IMR-90 (cell line): ENCODE measurements at regions of chr11 and their contacts with region 1.

Region 1: GRCh38 chr11:14249121-14249963 is 109.6 kb downstream of the RRAS2 start:
- DNase-seq: peak; percentile 53
- ATAC-seq: peak; percentile 56
- H3K4me3 ChIP-seq: no peak overlapping the region
- H3K27ac ChIP-seq: no peak overlapping the region
- H3K4me1 ChIP-seq: peaks cover 2% of the 10 kb centered on the region; the same call in 1 of the 2 replicates
- H3K27me3 ChIP-seq: peaks cover 49% of the 10 kb centered on the region
- CTCF ChIP-seq: peak; percentile 92
- POLR2A ChIP-seq: 0 out of 2 replicates have a peak, but pooled peaks have one; percentile 23
- RAD21 ChIP-seq: peak; percentile 95

Region 2: DNA sequence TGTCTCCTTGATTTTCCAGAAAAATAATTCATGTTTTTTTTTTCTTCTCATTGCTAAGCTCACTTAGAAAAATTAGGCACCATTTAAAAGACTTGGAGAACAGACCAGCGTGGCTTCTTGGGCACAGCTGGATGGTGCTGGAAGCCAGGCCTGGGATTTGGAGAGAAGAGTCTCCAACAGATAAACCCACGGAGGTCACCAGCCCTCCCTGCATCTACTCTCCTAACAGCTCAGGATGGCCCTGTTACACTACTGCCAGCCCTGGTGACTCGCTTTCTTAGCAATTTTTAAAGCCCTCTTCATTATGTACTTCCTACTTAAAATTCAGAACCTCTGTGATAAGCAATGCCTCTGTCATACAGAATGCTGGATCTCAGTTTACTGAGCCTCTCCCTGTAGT is 755.3 kb before region 1 on chr11:
- CTCF ChIA-PET with region 1: no interaction called
- POLR2A ChIA-PET with region 1: no interaction called
- dilution Hi-C with region 1: no loop called
- in situ Hi-C with region 1: no loop called
- intact Hi-C with region 1: loop called (anchors 5 kb)
- DNase-seq: no peak
- ATAC-seq: no peak
- H3K4me3 ChIP-seq: no peak overlapping the region
- H3K27ac ChIP-seq: no peak overlapping the region
- H3K4me1 ChIP-seq: no peaks in the 10 kb centered on the region
- H3K27me3 ChIP-seq: peaks cover 5% of the 10 kb centered on the region
- CTCF ChIP-seq: no peak
- POLR2A ChIP-seq: no peak
- RAD21 ChIP-seq: no peak

Region 3: GRCh38 chr11:13772223-13773046 is 476.9 kb before region 1 on chr11:
- CTCF ChIA-PET with region 1: interaction called, 7 read pairs
- POLR2A ChIA-PET with region 1: no interaction called
- dilution Hi-C with region 1: no loop called
- in situ Hi-C with region 1: loop called (anchors 10 kb)
- intact Hi-C with region 1: loop called (anchors 1 kb)
- DNase-seq: peak; percentile 62
- ATAC-seq: no peak; the same call in 1 of the 2 replicates
- H3K4me3 ChIP-seq: no peak overlapping the region
- H3K27ac ChIP-seq: no peak overlapping the region
- H3K4me1 ChIP-seq: no peaks in the 10 kb centered on the region
- H3K27me3 ChIP-seq: peaks cover 7% of the 10 kb centered on the region
- CTCF ChIP-seq: peak; percentile 54
- POLR2A ChIP-seq: no peak
- RAD21 ChIP-seq: peak; percentile 57

Region 4: GRCh38 chr11:14270690-14271542 is 21.6 kb after region 1 on chr11:
- CTCF ChIA-PET with region 1: no interaction called
- POLR2A ChIA-PET with region 1: no interaction called
- dilution Hi-C with region 1: no loop called
- in situ Hi-C with region 1: no loop called
- intact Hi-C with region 1: no loop called
- DNase-seq: no peak
- ATAC-seq: no peak
- H3K4me3 ChIP-seq: no peak overlapping the region
- H3K27ac ChIP-seq: no peak overlapping the region
- H3K4me1 ChIP-seq: peaks cover 4% of the 10 kb centered on the region; the same call in 1 of the 2 replicates
- H3K27me3 ChIP-seq: no peaks in the 10 kb centered on the region
- CTCF ChIP-seq: no peak
- POLR2A ChIP-seq: no peak
- RAD21 ChIP-seq: no peak